ENCODE measurements at regions of chr4 and their contacts with region 1.

Region 1: DNA sequence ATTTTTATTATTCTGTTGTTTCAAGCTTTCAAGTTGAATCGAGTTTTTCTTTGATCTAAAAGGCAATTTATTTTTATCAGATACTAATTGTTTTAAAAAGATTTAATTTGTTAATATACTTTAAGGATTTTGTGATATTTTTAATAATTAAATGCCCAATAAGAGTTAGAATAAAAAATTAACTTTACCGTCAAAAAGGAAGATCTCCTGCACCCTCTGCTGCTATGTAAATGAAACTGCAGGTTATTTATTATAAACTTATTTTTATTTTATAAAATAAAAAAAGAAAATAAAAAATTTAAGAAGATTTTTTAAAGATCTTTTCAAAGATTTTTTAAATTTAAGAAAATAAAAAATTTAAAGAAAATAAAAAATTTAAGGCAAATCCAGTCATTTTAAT is 166.1 kb downstream of the CCSER1 start:
- DNase-seq: no peak
- ATAC-seq: no peak
- H3K4me3 ChIP-seq: no peak overlapping the region
- H3K27ac ChIP-seq: no peak overlapping the region
- H3K4me1 ChIP-seq: no peaks in the 10 kb centered on the region
- H3K27me3 ChIP-seq: no peaks in the 10 kb centered on the region
- CTCF ChIP-seq: no peak
- EP300 ChIP-seq: no peak
- POLR2A ChIP-seq: no peak
- RAD21 ChIP-seq: no peak

Region 2: GRCh38 chr4:90025248-90025647 is 268.1 kb before region 1 on chr4:
- CTCF ChIA-PET with region 1: interaction called, 7 read pairs
- POLR2A ChIA-PET with region 1: no interaction called
- in situ Hi-C with region 1: loop called (anchors 10 kb)
- intact Hi-C with region 1: loop called (anchors 1 kb)
- DNase-seq: no peak
- ATAC-seq: no peak
- H3K4me3 ChIP-seq: no peak overlapping the region
- H3K27ac ChIP-seq: no peak overlapping the region
- H3K4me1 ChIP-seq: no peaks in the 10 kb centered on the region
- H3K27me3 ChIP-seq: no peaks in the 10 kb centered on the region
- CTCF ChIP-seq: no peak
- EP300 ChIP-seq: no peak
- POLR2A ChIP-seq: no peak
- RAD21 ChIP-seq: no peak

Region 3: DNA sequence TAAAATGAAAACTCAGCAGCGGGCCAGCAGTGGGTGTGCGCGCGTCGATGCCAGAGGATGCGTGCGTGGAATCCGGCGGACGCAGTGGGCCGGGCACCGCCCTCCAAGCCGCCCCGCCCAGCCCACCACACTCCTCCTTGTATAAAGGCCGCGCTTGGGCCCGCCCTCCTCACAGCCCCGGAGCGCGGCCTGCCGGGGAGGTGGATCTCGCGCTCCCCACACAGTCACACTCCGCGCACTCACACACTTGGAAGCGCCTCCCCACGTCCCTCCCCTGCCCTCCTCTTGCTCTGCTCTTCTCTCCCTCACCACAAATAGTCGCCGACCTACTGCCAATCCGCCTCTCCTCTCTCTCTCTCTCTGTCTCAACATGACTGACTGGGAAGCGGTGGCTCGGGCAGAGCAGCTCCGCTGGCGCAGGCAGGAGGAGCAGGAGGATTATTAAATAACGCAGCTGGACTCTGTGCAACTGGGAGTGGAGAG is 166.1 kb before region 1 on chr4 and contains the start of gene CCSER1:
- CTCF ChIA-PET with region 1: no interaction called
- POLR2A ChIA-PET with region 1: no interaction called
- in situ Hi-C with region 1: no loop called
- intact Hi-C with region 1: loop called (anchors 10 kb)
- DNase-seq: no peak
- ATAC-seq: peak; percentile 71
- H3K4me3 ChIP-seq: no peak within 1 kb of the TSS; a peak in 1 of 6 replicates
- H3K27ac ChIP-seq: no peak within 1 kb of the TSS
- H3K4me1 ChIP-seq: no peaks in the 10 kb centered on the region
- H3K27me3 ChIP-seq: peaks cover 0 to 7% of the 10 kb centered on the region in 2 experiments; a peak in 2 of 5 replicates
- CTCF ChIP-seq: no peak
- EP300 ChIP-seq: no peak
- POLR2A ChIP-seq: no peak
- RAD21 ChIP-seq: no peak
- total RNA-seq, gene CCSER1: not detected in 2 replicates

Region 4: GRCh38 chr4:90546114-90546513 is 252.8 kb after region 1 on chr4:
- CTCF ChIA-PET with region 1: no interaction called
- POLR2A ChIA-PET with region 1: no interaction called
- in situ Hi-C with region 1: no loop called
- intact Hi-C with region 1: no loop called
- DNase-seq: no peak
- ATAC-seq: no peak
- H3K4me3 ChIP-seq: no peak overlapping the region
- H3K27ac ChIP-seq: no peak overlapping the region
- H3K4me1 ChIP-seq: no peaks in the 10 kb centered on the region
- H3K27me3 ChIP-seq: no peaks in the 10 kb centered on the region
- CTCF ChIP-seq: no peak
- EP300 ChIP-seq: no peak
- POLR2A ChIP-seq: no peak
- RAD21 ChIP-seq: no peak